Breast epithelium (tissue), 4 donors: ENCODE measurements at regions of chr17 and their contacts with region 1.

Region 1: GRCh38 chr17:45164823-45165222 is 3.1 kb downstream of the HEXIM2 start:
- DNase-seq: no peak
- H3K4me3 ChIP-seq: no peak overlapping the region
- H3K27ac ChIP-seq: no peak overlapping the region
- H3K4me1 ChIP-seq: peaks cover under 1 to 10% of the 10 kb centered on the region in 2 donors
- H3K27me3 ChIP-seq: no peaks in the 10 kb centered on the region
- CTCF ChIP-seq: no peak
- POLR2A ChIP-seq: no peak

Region 2: DNA sequence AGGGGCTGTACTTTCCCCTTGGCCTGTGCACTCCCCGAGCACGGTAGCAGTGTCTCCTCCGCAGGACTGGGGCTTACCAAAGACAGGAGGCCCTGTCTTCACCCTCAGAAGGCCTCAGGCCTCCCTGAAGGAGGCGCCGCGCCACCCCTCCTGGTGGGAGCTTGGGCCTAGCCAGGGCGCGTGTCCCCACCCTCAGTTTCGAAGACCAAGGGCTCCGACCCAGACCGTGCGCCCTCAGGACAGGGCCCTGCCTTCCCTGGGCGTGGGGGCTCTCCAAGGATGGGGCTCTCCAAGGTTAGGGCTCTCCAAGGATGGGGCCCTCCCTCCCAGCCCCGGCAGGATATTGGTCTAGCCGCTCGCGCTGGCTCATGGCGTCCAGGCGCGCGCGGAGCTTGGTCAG is 44.3 kb before region 1 on chr17:
- intact Hi-C with region 1: loop called (anchors 1 kb)
- DNase-seq: no peak
- H3K4me3 ChIP-seq: no peak overlapping the region
- H3K27ac ChIP-seq: no peak overlapping the region
- H3K4me1 ChIP-seq: peaks cover 0 to 8% of the 10 kb centered on the region in 2 donors
- H3K27me3 ChIP-seq: no peaks in the 10 kb centered on the region
- CTCF ChIP-seq: no peak
- POLR2A ChIP-seq: no peak